SK-N-SH (cell line): ENCODE measurements at regions of chr2 and their contacts with region 1.

Region 1: GRCh38 chr2:236352761-236353593 is 88.8 kb upstream of the ASB18 start:
- DNase-seq: peak; percentile 58
- H3K4me3 ChIP-seq: peak overlapping the region in 1 of 2 experiments; percentile 14; a peak in 1 of 4 replicates
- H3K27ac ChIP-seq: no peak overlapping the region
- H3K4me1 ChIP-seq: no peaks in the 10 kb centered on the region
- H3K27me3 ChIP-seq: no peaks in the 10 kb centered on the region
- CTCF ChIP-seq: peak; percentile 95
- EP300 ChIP-seq: no peak
- RAD21 ChIP-seq: peak; percentile 78

Region 2: GRCh38 chr2:236512902-236513435 is 160.0 kb after region 1 on chr2:
- CTCF ChIA-PET with region 1: interaction called, 10 read pairs
- POLR2A ChIA-PET with region 1: no interaction called
- DNase-seq: peak; percentile 72
- H3K4me3 ChIP-seq: no peak overlapping the region; a peak in 1 of 4 replicates
- H3K27ac ChIP-seq: no peak overlapping the region
- H3K4me1 ChIP-seq: no peaks in the 10 kb centered on the region
- H3K27me3 ChIP-seq: no peaks in the 10 kb centered on the region; the same call in 1 of the 2 replicates
- CTCF ChIP-seq: peak; percentile 61
- EP300 ChIP-seq: no peak
- RAD21 ChIP-seq: peak; percentile 66

Region 3: DNA sequence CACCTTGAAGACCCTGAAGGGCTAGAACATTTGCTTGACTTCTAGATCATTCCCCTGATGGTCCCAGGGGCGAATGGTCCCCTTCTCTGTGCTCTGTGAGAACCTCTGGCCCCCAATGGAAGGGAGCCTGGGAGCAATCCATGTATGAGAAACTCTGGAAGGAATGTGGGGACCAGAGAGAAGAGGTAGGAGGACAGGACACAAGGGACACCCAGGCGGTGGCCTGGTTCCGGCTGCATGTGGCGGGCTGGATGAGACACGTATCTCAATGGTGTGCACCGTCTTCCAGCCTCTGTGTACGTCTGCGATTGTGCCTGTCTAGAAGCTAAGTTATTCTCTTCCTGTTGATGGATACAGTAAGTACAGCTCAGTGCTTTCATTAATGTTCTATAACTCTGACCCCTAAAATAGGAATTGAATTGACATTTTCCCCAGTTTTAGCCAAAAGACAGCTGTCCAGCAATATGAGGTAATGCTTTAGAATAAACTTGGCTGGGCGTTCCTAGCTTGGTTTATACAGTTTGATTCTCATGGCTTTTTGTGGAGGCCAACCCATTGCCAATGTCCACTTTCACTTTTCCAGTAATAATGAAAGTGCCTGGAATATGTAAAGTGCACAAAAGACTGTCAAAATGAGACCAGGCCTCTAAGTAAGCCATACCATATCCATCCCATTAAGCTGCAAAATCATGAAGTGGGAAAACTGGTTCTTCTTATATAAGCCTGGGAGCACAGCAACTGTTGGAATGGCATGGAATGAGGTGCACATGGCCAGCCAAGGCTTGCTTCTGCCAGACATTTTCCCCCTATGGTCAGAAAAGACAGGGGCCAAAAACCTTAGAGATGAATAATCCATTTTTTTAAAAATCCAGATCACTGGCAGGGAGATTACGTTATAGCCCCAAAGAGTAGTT is 702.7 kb after region 1 on chr2:
- CTCF ChIA-PET with region 1: interaction called, 84 read pairs
- POLR2A ChIA-PET with region 1: no interaction called
- DNase-seq: no peak
- H3K4me3 ChIP-seq: no peak overlapping the region
- H3K27ac ChIP-seq: no peak overlapping the region
- H3K4me1 ChIP-seq: no peaks in the 10 kb centered on the region; a peak in 1 of 4 replicates
- H3K27me3 ChIP-seq: no peaks in the 10 kb centered on the region
- CTCF ChIP-seq: no peak
- EP300 ChIP-seq: no peak
- RAD21 ChIP-seq: no peak